AG04450 (cell line): ENCODE measurements at regions of chr10 and their contacts with region 1.

Region 1: DNA sequence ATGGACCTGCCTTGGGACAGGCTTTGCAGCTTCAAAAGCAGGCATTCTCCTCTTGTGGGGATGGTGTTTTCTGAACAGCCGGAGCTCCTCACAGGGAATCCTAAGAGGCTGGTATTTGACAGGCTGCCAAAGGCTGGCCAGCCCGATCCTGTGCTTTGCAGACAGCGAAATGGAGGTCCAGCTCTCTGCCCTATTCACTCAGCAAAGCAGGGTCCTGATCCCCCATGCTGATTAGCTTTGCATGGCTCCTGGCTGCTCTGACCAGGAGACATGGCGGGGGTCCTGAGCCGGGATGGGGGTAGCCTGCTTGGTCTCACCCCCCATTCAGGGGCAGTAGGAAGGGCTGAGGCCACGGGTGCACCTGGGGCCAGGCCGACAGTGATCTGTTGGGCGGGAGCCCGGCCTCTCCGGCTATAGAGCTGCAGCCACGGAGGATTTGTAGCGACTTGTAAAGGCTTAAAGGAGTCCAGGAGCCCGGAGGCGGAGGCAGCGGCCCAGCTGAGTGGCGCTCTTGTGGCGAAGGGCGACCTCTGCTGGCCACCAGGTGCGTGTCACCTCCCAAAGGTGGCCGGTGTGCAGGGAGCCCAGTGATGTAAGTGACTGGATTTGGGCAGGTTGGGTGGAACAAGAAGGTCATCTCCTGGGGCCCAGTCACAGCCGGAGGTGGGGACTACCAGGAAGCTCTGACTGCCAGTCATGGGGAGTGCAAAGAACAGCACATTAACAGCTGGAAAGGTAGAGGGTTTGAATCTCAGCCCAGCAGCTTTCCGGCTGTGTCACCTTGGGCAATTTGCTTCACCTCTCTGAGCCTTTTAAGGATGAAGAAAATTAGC is 126.5 kb downstream of the ZMIZ1 start:
- DNase-seq: peak; percentile 74
- H3K4me3 ChIP-seq: no peak overlapping the region
- H3K27ac ChIP-seq: peak overlapping the region; percentile 78
- H3K27me3 ChIP-seq: no peaks in the 10 kb centered on the region
- CTCF ChIP-seq: peak; percentile 94

Region 2: DNA sequence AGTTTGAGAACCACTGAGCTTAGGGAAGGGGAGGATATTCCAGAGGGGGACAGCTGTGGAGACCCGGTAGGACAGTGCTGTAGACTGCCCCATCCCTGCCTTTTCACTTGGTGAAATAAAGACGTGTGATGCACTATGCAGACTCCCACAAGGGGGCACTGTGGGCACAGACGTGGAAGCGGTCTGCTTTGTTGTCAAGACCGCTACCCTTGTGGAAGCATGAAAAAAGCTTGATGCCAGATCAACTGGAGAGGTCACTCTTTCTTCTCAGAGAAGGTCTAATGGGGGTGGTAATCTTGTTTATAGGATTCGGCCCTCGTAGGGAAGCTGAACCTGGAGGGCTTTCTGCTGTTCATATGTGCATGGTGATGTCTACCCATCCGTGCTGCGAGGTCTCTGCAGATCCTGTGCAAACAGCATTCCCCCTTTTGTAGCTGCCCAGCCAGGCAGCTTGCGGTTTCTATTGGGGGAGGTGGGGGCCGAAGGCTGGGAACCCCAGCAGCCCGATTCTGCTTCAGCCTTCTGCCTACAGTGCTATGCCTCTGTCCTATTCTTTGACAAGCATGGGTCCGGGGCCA is 1147.9 kb before region 1 on chr10:
- CTCF ChIA-PET with region 1: interaction called, 35 read pairs
- POLR2A ChIA-PET with region 1: no interaction called
- DNase-seq: peak; percentile 77
- H3K4me3 ChIP-seq: no peak overlapping the region
- H3K27ac ChIP-seq: no peak overlapping the region
- H3K27me3 ChIP-seq: no peaks in the 10 kb centered on the region
- CTCF ChIP-seq: peak; percentile 92

Region 3: GRCh38 chr10:79073784-79074432 is 121.4 kb before region 1 on chr10:
- CTCF ChIA-PET with region 1: interaction called, 16 read pairs
- POLR2A ChIA-PET with region 1: interaction called, 9 read pairs
- DNase-seq: no peak
- H3K4me3 ChIP-seq: peak overlapping the region; percentile 25
- H3K27ac ChIP-seq: no peak overlapping the region
- H3K27me3 ChIP-seq: no peaks in the 10 kb centered on the region
- CTCF ChIP-seq: no peak

Region 4: GRCh38 chr10:79132681-79133381 is 62.5 kb before region 1 on chr10:
- CTCF ChIA-PET with region 1: interaction called, 10 read pairs
- POLR2A ChIA-PET with region 1: interaction called, 3 read pairs
- DNase-seq: no peak
- H3K4me3 ChIP-seq: no peak overlapping the region
- H3K27ac ChIP-seq: peak overlapping the region; percentile 57
- H3K27me3 ChIP-seq: no peaks in the 10 kb centered on the region
- CTCF ChIP-seq: no peak

Region 5: GRCh38 chr10:79184145-79184625 is 11.1 kb before region 1 on chr10:
- CTCF ChIA-PET with region 1: interaction called, 19 read pairs
- POLR2A ChIA-PET with region 1: no interaction called
- DNase-seq: no peak
- H3K4me3 ChIP-seq: no peak overlapping the region
- H3K27ac ChIP-seq: peak overlapping the region; percentile 70
- H3K27me3 ChIP-seq: no peaks in the 10 kb centered on the region
- CTCF ChIP-seq: no peak

Region 6: GRCh38 chr10:79234391-79235315 is 39.3 kb after region 1 on chr10:
- CTCF ChIA-PET with region 1: no interaction called
- POLR2A ChIA-PET with region 1: no interaction called
- DNase-seq: no peak
- H3K4me3 ChIP-seq: no peak overlapping the region
- H3K27ac ChIP-seq: peak overlapping the region; percentile 65
- H3K27me3 ChIP-seq: no peaks in the 10 kb centered on the region
- CTCF ChIP-seq: no peak

Region 7: GRCh38 chr10:79322616-79323543 is 127.6 kb after region 1 on chr10:
- CTCF ChIA-PET with region 1: no interaction called
- POLR2A ChIA-PET with region 1: no interaction called
- DNase-seq: no peak
- H3K4me3 ChIP-seq: no peak overlapping the region
- H3K27ac ChIP-seq: peak overlapping the region; percentile 34
- H3K27me3 ChIP-seq: no peaks in the 10 kb centered on the region
- CTCF ChIP-seq: no peak